ENCODE measurements at regions of chr22 and their contacts with region 1.

Region 1: GRCh38 chr22:19970479-19971275 is 29.1 kb upstream of the TXNRD2 start:
- DNase-seq: peak; percentile 86
- ATAC-seq: peak; percentile 86
- H3K4me3 Mint-ChIP-seq: no peak overlapping the region
- H3K27ac Mint-ChIP-seq: no peak overlapping the region
- H3K4me1 Mint-ChIP-seq: peaks cover 11% of the 10 kb centered on the region
- H3K27me3 Mint-ChIP-seq: no peaks in the 10 kb centered on the region

Region 2: DNA sequence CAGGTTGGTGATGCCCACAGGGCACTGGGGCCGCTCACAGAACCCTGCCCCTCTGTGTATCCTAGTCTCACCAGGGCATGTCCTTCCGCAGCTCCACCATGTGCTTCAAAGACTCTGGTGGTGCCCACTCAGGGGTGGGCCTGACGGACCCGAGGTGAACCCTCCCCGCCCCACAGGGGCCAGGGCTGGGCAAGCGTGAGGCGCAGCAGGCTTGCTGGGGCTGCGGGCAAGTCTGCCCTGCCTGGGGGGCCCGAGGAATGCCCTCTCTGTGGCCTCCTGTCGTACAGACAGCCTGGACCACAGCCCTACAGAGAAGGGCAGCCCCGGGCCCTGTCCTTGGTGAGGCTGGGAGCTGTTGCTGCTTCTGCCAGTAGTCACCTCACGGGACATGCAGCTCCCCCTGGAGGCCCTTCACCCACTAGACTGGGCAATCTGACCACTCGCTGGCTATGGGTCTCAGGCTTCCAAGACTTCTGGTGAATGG is 169.9 kb before region 1 on chr22:
- CTCF ChIA-PET with region 1: no interaction called
- POLR2A ChIA-PET with region 1: no interaction called
- intact Hi-C with region 1: no loop called
- DNase-seq: no peak
- ATAC-seq: no peak
- H3K4me3 Mint-ChIP-seq: no peak overlapping the region
- H3K27ac Mint-ChIP-seq: no peak overlapping the region
- H3K4me1 Mint-ChIP-seq: peaks cover under 1% of the 10 kb centered on the region
- H3K27me3 Mint-ChIP-seq: no peaks in the 10 kb centered on the region

Region 3: GRCh38 chr22:19874307-19875060 is 96.2 kb before region 1 on chr22:
- CTCF ChIA-PET with region 1: no interaction called
- POLR2A ChIA-PET with region 1: no interaction called
- intact Hi-C with region 1: no loop called
- DNase-seq: peak; percentile 61
- ATAC-seq: peak; percentile 78
- H3K4me3 Mint-ChIP-seq: no peak overlapping the region
- H3K27ac Mint-ChIP-seq: no peak overlapping the region
- H3K4me1 Mint-ChIP-seq: peaks cover 10% of the 10 kb centered on the region
- H3K27me3 Mint-ChIP-seq: no peaks in the 10 kb centered on the region

Region 4: GRCh38 chr22:20111045-20111688 is 140.5 kb after region 1 on chr22:
- CTCF ChIA-PET with region 1: interaction called, 13 read pairs
- POLR2A ChIA-PET with region 1: no interaction called
- intact Hi-C with region 1: loop called in 1 of 2 experiments (anchors 5 kb)
- DNase-seq: peak; percentile 66
- ATAC-seq: peak; percentile 79
- H3K4me3 Mint-ChIP-seq: no peak overlapping the region
- H3K27ac Mint-ChIP-seq: peak overlapping the region; percentile 93
- H3K4me1 Mint-ChIP-seq: peaks cover 29% of the 10 kb centered on the region
- H3K27me3 Mint-ChIP-seq: no peaks in the 10 kb centered on the region

Region 5: DNA sequence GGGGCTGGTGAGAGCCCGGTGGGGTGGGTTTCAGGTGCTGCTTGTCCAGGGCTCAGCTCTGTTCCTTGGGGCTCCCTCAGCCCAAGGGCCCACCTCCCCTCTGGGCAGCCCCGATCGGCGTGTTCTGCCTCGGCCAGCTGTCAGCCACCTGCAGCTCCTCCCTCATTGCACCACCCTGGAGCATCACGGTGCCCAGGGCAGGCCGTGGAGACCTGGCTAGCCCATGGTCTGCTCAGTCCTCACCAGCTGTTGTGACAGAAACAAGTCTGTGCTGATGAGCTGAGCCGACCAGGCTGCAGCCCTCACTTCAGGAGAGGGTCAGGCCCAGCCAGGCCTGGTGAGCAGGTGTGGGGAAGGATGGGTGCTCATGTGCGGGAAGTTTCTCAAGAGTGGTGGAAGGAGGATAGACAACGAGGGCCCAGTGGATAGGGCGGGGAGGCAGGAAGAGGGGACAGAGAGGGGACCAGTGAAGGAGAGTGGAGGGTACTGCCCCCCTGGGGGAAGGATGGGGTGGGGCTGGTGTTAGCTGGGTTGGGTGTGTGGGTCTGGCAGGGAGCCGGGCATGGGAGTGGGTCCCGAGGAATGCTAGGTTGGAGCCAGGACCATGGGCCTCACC is 313.9 kb after region 1 on chr22:
- CTCF ChIA-PET with region 1: no interaction called
- POLR2A ChIA-PET with region 1: no interaction called
- intact Hi-C with region 1: loop called in 1 of 2 experiments (anchors 1 kb)
- DNase-seq: no peak
- ATAC-seq: no peak
- H3K4me3 Mint-ChIP-seq: no peak overlapping the region
- H3K27ac Mint-ChIP-seq: no peak overlapping the region
- H3K4me1 Mint-ChIP-seq: no peaks in the 10 kb centered on the region
- H3K27me3 Mint-ChIP-seq: no peaks in the 10 kb centered on the region

Measured in activated CD4-positive, alpha-beta T cell treated with anti-CD3 and anti-CD28 coated beads for 36 hours (primary cell).